A673 (cell line): ENCODE measurements at regions of chr13 and their contacts with region 1.

Region 1: DNA sequence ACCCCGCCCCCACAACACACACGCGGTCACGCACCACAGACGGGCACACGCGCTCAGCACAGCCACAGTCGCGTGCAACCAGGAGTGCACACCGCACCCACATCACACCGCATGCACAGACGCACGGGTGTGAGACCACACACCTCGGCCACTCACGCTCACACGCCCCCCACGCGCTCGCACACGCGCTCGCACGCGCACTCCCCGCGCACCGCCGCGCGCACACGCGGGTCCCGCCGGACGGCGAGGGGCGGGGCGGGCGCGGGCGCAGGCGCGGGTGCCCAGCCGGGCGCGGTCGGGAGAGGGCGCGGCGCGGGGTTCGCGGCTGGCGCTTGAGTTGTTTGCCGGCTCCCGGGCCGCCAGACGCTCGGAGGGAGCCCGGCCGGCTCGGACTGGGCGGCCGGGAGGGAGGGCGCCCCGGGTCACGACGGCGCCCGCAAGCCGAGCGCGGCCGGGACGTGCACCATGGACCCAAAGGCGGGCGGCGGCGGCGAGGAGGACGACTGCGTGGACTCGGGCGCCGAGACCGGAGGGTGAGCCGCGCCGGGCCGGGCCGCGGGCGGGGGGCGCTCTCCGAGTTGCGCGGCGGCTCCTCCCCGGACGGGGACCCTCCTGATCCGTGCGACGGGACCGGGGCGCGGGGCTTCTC is at the start of gene FAM124A:
- DNase-seq: peak; percentile 71
- H3K4me3 ChIP-seq: peak within 1 kb of the TSS; percentile 64
- H3K27ac ChIP-seq: peak within 1 kb of the TSS; percentile 44
- H3K4me1 ChIP-seq: peaks cover 16% of the 10 kb centered on the region
- H3K27me3 ChIP-seq: peaks cover 4% of the 10 kb centered on the region
- CTCF ChIP-seq: no peak
- total RNA-seq, gene FAM124A: 2.1 and 2.2 TPM in 2 replicates

Region 2: GRCh38 chr13:50969691-50970090 is 252.5 kb before region 1 on chr13:
- CTCF ChIA-PET with region 1: no interaction called
- POLR2A ChIA-PET with region 1: no interaction called
- intact Hi-C with region 1: no loop called
- DNase-seq: peak; percentile 34
- H3K4me3 ChIP-seq: no peak overlapping the region
- H3K27ac ChIP-seq: no peak overlapping the region
- H3K4me1 ChIP-seq: no peaks in the 10 kb centered on the region
- H3K27me3 ChIP-seq: no peaks in the 10 kb centered on the region
- CTCF ChIP-seq: peak; percentile 36; the same call in 1 of the 2 replicates

Region 3: GRCh38 chr13:51154029-51154555 is 68.1 kb before region 1 on chr13:
- CTCF ChIA-PET with region 1: interaction called, 5 read pairs
- POLR2A ChIA-PET with region 1: no interaction called
- intact Hi-C with region 1: loop called (anchors 10 kb)
- DNase-seq: peak; percentile 29
- H3K4me3 ChIP-seq: no peak overlapping the region
- H3K27ac ChIP-seq: no peak overlapping the region
- H3K4me1 ChIP-seq: peaks cover 10% of the 10 kb centered on the region
- H3K27me3 ChIP-seq: no peaks in the 10 kb centered on the region
- CTCF ChIP-seq: no peak

Region 4: GRCh38 chr13:51797664-51798488 is 575.7 kb after region 1 on chr13:
- CTCF ChIA-PET with region 1: no interaction called
- POLR2A ChIA-PET with region 1: no interaction called
- intact Hi-C with region 1: loop called (anchors 5 kb)
- DNase-seq: peak; percentile 63
- H3K4me3 ChIP-seq: no peak overlapping the region
- H3K27ac ChIP-seq: no peak overlapping the region
- H3K4me1 ChIP-seq: peaks cover 13% of the 10 kb centered on the region
- H3K27me3 ChIP-seq: no peaks in the 10 kb centered on the region
- CTCF ChIP-seq: peak; percentile 58